Esophagus squamous epithelium (tissue), 5 donors: ENCODE measurements at regions of chr2 and their contacts with region 1.

Region 1: DNA sequence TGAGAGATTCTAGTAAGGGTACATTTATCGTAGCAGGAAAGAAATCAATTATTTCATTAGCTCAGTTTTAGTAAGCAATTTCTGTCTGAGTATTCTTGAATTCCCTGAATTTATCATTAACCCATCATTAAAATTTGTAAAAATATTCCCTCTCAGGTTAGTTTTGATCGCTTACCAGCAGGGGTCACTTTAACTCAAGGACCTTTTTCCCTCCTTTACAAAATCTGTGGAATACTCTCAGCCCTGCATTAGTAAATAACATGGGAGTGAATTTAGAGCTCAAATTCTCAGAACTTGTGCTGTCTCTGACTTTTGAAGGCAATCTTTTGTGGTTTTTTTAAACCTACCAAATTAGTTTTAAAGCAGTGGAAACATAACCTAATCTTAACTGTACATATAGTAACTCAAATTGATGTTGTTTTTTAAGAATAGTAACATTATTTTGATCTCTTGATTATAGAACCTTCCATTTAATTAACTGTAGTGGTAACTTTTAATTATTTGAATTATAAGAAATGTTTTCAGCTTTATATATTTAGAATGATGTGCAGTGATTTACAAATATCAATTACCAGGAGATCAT is 97.2 kb downstream of the AGPS start:
- DNase-seq: no peak
- H3K4me3 ChIP-seq: no peak overlapping the region
- H3K27ac ChIP-seq: no peak overlapping the region
- H3K4me1 ChIP-seq: no peaks in the 10 kb centered on the region
- H3K27me3 ChIP-seq: no peaks in the 10 kb centered on the region
- CTCF ChIP-seq: peak in 4 of 6 experiments; percentile 25 to 56 (median 32)
- POLR2A ChIP-seq: no peak

Region 2: DNA sequence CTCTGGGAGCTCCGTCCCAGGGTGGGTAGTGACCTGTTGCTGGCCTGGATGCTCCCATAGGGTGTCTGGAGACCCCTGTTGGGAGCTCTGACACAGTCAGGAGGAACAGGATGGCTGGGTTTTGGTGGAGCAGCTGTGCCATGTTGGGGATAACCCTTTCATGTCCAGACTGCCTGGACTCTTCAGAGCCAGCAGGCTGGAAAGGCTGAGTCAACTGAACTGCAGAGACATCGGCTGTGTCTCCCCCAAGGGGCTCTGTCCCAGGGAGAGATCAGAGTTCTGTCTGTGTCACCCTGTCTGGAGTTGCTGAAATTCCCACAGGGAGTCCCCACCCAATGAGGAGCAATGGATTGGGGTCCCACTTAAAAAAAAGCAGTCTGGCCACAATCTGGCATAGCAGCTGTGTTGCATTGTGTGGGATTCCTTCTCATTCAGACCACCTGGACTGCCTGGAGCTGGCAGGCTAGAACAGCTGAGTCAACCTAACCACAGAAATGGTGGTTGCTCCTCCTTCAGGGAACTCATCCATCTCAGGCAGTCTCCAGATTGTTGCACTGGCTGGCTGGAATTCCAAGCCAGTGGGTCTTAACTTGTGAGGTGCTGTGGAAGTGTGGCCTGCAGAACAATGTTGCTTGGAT is 60.0 kb before region 1 on chr2:
- intact Hi-C with region 1: no loop called
- DNase-seq: no peak
- H3K4me3 ChIP-seq: no peak overlapping the region
- H3K27ac ChIP-seq: no peak overlapping the region
- H3K4me1 ChIP-seq: peaks cover 0 to 4% (median 0%) of the 10 kb centered on the region in 3 donors
- H3K27me3 ChIP-seq: no peaks in the 10 kb centered on the region
- CTCF ChIP-seq: no peak
- POLR2A ChIP-seq: no peak

Region 3: DNA sequence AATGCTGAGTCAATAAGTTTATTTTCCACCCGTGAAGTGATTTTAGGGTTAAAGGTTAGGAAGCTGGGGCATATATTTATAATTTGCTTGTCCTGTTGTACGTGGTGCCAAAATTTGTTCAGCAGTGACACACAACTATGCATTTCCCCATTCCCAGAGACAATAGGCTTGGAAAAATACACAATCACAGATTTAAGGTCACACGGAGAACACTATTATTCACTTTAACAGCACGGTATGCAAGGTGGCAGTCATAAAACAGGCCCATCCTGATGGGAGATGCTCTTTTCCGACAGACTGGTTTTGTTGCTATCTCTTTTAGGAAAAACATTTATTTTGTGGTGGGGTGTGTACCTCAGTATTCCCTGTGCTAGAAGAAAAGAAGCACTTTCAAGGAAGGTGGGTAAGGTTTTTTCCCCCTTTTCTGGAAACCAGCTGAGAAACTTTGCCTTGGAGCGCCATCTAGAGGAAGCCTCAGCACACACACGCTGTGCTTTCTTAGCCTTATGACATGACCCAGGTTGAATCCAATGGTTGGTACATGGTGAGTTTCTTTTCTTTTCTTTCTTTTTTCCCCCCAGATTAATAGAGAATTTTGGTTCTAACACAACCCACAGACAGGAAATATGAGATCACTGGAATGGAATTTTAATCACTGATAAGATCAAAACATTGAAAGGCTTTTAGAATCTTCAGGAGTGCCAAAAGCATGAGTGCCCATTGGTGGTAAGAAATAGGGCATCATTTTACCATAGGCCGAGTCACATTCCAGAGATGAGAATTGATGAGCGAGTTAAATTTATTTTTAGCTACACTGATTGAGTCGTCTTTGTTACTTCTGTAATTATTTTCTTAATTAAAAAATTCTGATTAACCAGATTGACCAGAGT is 234.8 kb after region 1 on chr2:
- intact Hi-C with region 1: loop called (anchors 10 kb)
- DNase-seq: no peak
- H3K4me3 ChIP-seq: no peak overlapping the region
- H3K27ac ChIP-seq: no peak overlapping the region
- H3K4me1 ChIP-seq: no peaks in the 10 kb centered on the region
- H3K27me3 ChIP-seq: no peaks in the 10 kb centered on the region
- CTCF ChIP-seq: peak in 5 of 6 experiments; percentile 60 to 80 (median 78)
- POLR2A ChIP-seq: no peak